Right ventricle myocardium superior (tissue), 1 donor: ENCODE measurements at regions of chr10 and their contacts with region 1.

Region 1: DNA sequence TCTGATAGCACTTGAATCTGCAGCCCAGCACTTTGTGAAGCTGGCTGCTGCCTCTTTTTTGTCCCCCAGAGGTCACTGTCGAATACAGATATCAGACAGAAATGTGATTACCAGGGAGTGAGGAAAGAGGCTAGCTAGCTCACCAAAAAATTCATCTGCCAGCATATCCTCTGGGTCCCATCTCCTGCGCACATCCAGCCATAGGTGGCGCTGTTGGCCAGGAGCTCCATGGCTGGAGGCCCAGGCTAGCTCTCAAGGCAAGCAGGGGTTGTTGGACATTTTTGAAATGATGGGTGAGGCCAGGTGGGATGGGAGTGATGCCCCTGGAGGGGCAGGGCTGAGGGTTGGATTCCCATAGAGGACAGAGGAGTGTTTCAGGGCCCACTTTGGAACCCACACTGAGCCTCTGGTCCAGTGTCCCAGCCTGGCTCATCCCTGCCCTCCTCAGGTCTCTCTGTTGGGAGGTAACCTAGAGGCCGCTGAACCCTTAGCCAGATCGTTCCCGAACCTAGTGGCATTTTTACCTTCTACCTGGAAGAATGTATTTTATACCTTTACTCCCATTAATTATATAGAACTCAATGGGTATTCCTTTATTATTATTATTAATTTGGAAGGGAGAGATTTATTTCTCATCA is 14.8 kb downstream of the DPCD start:
- DNase-seq: peak; percentile 80
- ATAC-seq: peak; percentile 90

Region 2: GRCh38 chr10:101779544-101780186 is 176.8 kb after region 1 on chr10:
- intact Hi-C with region 1: loop called (anchors 2 kb)
- DNase-seq: peak; percentile 89
- ATAC-seq: peak; percentile 81